ENCODE measurements at regions of chr10 and their contacts with region 1.

Region 1: DNA sequence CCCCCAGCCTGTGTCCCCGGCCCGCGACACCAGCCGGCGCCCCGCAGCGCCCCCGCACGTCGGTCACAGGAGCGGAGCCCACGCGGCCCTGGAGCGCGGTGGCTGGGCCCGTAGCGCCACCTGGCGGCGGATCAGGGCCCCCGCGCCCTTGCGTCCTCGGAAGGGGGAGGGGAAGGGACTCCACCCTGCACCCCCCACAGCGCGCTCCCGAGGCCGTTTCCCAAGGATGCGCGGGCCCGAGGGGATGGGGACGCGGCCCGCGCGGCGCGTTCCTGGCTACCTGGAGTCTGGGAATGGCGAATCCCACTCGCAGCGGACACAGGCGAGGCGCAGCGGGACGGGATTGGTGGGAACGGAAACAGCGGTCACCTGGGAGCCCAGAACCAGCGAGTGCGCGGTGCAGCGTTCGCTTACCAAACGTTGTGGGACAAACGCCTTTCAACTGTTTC is 23.8 kb upstream of the MKI67 start:
- DNase-seq: peak; percentile 65
- H3K4me3 ChIP-seq: peak overlapping the region; percentile 48 to 85 (median 74)
- H3K27ac ChIP-seq: no peak overlapping the region
- H3K4me1 ChIP-seq: peaks cover 12% of the 10 kb centered on the region
- H3K27me3 ChIP-seq: no peaks in the 10 kb centered on the region
- CTCF ChIP-seq: peak; percentile 66 to 88

Region 2: DNA sequence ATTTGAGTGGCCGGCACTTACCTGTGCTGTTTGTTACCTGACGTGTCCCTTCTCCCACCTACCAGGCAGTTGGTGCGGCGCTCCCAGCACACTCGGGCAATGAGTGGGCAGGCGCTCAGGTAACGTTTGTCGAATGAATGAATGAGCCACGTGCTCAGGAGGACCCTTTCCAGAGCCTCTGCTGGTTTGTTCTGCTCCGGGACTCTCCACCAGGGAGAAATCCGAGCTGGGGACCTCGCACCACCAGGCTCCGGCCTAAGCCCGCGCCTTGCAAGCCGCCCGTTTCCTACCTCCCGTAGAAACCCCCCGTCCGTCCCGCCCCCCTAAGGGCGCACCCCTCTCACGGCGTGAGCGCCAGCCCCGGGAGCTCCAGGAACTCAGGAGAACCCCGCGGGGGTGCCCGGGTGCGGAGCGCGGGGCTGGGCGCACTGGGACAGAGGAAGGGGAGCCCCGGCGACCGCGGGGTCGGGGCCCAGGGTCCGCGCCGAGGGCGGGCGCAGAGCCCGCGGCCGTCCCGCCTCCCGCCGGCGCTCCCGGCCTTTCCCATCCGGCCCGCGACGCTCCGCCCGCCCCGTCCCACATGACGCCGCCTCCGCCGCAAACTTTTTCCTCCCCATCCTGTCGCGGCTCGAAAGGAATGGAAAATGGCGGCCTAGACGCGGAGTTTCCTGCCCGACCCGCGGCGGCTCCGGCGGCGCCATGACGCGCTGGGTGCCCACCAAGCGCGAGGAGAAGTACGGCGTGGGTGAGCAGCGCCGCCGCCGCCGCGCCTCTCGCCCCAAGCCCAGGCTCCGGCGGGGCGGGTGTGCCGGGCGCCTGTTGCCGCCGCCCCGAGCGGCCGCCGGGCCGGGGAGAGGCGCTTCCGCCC is 1245.0 kb before region 1 on chr10 and contains the start of gene DOCK1:
- CTCF ChIA-PET with region 1: no interaction called
- dilution Hi-C with region 1: no loop called
- in situ Hi-C with region 1: no loop called
- intact Hi-C with region 1: no loop called
- DNase-seq: peak; percentile 70
- H3K4me3 ChIP-seq: peak within 1 kb of the TSS; percentile 65 to 76 (median 75)
- H3K27ac ChIP-seq: peak within 1 kb of the TSS; percentile 56
- H3K4me1 ChIP-seq: peaks cover 41% of the 10 kb centered on the region
- H3K27me3 ChIP-seq: no peaks in the 10 kb centered on the region
- CTCF ChIP-seq: no peak
- total RNA-seq, gene DOCK1: 58.1 to 115 TPM

Region 3: DNA sequence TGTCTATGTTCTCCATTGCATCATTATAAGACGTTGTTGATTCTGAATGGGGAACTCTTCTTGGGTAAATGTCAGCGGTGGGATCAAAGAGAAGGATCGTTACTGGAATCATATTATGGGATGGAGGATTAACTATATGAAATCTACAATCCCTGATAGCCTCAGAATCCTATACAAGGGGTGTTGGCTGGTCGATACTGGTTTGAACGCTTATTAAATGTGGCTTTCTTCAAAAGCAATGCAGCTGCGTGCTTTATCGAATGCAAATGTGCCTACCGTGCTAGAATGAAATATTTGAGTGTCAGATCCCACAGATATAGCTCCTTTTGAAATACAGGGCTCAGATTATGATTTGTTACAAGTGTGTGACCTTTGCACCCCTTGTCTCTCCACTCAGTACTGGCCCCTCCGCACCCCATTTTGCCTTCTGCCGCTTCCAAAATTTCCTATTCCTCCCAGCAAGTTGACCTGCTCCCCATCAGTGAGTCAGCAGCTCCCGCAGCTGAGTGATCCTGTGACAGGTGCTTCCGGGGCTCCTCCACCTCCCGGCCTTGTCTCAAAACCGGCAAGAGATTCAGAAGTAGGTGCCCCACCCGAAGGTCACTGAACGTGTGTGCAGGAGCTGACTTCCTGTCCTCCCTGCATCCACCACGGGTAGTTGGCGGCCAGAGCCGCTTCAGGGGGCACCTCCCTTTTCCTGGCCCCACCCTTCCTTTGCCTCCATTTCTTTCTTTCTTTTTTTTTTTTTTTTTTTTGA is 166.5 kb before region 1 on chr10:
- CTCF ChIA-PET with region 1: no interaction called
- dilution Hi-C with region 1: no loop called
- in situ Hi-C with region 1: no loop called
- intact Hi-C with region 1: no loop called
- DNase-seq: no peak
- H3K4me3 ChIP-seq: no peak overlapping the region
- H3K27ac ChIP-seq: no peak overlapping the region
- H3K4me1 ChIP-seq: no peaks in the 10 kb centered on the region
- H3K27me3 ChIP-seq: no peaks in the 10 kb centered on the region
- CTCF ChIP-seq: no peak

Region 4: DNA sequence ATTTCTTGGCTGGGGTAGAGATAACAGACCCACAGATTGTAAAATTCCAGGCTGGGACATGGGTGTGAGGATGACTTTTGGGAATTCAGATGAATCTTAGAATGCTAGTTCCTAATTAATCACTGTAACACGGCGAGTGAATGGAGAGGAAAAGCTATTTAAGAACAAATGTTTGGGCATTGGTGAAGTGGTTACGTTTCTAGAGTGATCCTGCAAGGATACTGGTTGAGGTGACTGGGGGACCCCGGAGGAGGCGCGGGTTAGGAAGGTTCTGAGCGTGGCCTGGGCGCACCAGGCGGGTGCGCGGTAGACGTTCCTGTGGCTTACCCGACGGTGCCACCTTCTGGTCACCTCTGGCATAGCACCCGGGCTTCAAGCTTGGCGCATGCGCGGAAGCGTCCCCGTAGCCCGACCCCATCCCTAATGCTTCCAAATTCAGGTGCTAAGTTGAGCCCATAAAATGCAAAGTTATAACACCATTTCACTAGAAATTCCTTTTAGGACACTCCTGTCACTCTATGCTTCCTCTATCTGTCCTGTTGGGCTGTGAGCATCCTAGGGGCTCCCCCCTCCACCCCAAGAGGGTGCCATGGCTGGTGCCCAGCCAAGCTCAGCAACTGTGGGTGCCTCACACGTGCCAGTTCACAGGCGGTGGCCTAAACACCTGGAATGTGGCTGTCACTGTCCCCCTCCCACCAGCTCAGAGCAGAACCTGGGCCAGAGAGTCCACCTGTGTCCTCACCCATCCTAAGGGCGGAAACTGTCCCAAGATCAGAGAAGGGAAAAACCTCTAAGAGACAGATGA is 138.7 kb before region 1 on chr10:
- CTCF ChIA-PET with region 1: no interaction called
- dilution Hi-C with region 1: no loop called
- in situ Hi-C with region 1: no loop called
- intact Hi-C with region 1: loop called (anchors 1 kb)
- DNase-seq: peak; percentile 40
- H3K4me3 ChIP-seq: no peak overlapping the region
- H3K27ac ChIP-seq: no peak overlapping the region
- H3K4me1 ChIP-seq: no peaks in the 10 kb centered on the region
- H3K27me3 ChIP-seq: no peaks in the 10 kb centered on the region
- CTCF ChIP-seq: peak; percentile 95 to 100

Region 5: DNA sequence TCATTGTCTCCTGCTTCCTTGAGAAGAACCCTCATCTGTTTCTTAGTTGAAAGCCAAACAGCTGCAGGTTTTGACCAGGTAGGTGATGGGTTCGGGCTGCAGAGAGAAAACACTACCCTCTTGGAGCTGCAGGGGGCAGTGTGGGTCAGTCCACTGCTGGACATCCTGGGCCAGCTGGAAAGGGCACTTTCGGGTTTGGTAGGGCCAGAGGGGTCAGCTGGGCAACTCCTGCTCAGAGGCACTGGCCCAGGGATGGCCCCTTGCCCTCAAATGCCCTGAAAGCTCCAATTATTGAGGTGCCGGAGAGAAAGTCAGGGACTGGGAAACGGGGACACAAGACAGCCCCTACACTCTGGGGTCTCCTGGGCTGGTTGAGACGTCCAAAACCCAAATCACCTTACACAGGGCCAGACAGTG is 114.5 kb before region 1 on chr10:
- CTCF ChIA-PET with region 1: no interaction called
- dilution Hi-C with region 1: no loop called
- in situ Hi-C with region 1: no loop called
- intact Hi-C with region 1: loop called (anchors 1 kb)
- DNase-seq: peak; percentile 32
- H3K4me3 ChIP-seq: no peak overlapping the region
- H3K27ac ChIP-seq: no peak overlapping the region
- H3K4me1 ChIP-seq: peaks cover 8% of the 10 kb centered on the region
- H3K27me3 ChIP-seq: no peaks in the 10 kb centered on the region
- CTCF ChIP-seq: peak; percentile 84 to 97

Region 6: DNA sequence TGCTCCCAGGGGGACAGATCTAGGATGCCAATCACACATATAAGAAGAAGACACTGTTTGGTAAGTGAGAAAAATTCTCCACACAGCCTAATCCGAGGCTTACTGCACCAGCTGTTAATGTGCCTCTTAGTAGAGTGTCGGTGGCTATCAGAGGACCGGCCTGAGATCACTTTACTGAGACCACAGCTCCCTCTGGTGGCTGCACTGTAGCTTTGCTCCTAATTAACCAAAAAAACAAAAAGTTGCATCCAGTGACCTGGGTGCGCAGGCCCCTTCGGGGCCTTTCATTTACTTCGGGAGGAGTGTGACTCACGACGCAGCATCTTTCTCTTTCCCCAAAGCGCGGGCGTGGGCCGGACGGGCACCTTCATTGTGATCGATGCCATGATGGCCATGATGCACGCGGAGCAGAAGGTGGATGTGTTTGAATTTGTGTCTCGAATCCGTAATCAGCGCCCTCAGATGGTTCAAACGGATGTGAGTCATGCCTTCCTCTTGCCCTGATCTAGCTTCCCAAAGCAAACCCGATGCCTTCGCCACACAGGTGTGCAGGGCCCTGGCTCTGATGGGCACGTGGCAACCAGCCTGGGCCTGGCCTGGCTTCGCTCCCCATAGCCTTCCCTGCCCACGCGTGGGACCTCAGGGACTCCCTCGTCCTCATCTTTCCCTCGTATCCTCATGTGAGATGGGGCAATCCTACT is 80.6 kb before region 1 on chr10:
- CTCF ChIA-PET with region 1: no interaction called
- dilution Hi-C with region 1: no loop called
- in situ Hi-C with region 1: no loop called
- intact Hi-C with region 1: loop called (anchors 2 kb)
- DNase-seq: peak; percentile 85
- H3K4me3 ChIP-seq: no peak overlapping the region
- H3K27ac ChIP-seq: no peak overlapping the region
- H3K4me1 ChIP-seq: peaks cover 33% of the 10 kb centered on the region
- H3K27me3 ChIP-seq: no peaks in the 10 kb centered on the region
- CTCF ChIP-seq: peak; percentile 74 to 84

Region 7: DNA sequence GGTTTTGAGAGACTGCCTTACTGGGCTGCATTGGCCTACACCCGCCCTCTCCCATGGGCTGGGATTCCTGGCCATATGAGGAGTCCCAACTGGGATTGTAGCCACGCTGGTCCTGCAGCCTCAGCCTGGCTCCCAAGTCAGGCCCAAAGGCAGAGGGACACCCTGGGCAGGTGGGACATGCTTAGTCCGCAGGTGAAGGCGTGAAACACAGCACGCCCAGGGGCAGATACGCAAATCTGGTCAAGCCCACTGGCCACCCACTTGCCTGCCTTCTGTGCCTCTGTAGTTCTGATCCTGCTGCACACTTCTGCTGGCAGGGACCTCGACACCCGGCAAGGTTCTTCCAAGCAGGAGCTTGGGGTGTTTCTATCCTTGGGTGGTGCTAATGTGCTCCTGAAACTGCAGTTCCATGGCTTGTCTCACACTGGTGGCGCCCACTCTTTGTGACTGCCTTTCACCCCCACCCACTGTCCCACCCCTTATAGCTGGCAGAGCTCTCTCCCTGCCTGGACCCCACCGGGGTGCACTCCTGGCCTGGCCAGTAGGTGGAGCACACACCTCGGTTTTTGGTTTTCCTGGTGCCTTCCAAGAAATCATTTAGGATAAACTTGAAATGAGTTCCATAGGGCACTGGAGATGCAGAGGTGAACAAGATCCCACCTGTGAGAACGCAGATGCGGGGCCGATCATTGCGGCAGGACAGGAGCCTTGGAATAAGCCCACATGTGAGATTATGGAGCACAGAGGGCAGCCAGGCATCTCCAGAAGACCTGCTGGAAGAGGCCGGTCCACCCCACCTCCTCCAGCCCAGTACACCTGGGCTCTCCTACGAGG is 71.7 kb before region 1 on chr10:
- CTCF ChIA-PET with region 1: no interaction called
- dilution Hi-C with region 1: no loop called
- in situ Hi-C with region 1: loop called in 1 of 2 experiments (anchors 10 kb)
- intact Hi-C with region 1: loop called (anchors 1 kb)
- DNase-seq: no peak
- H3K4me3 ChIP-seq: no peak overlapping the region
- H3K27ac ChIP-seq: no peak overlapping the region
- H3K4me1 ChIP-seq: no peaks in the 10 kb centered on the region
- H3K27me3 ChIP-seq: no peaks in the 10 kb centered on the region
- CTCF ChIP-seq: peak; percentile 58 to 79

Region 8: GRCh38 chr10:128087884-128088709 is 62.0 kb before region 1 on chr10:
- CTCF ChIA-PET with region 1: no interaction called
- dilution Hi-C with region 1: no loop called
- in situ Hi-C with region 1: loop called in 1 of 2 experiments (anchors 10 kb)
- intact Hi-C with region 1: no loop called
- DNase-seq: peak; percentile 25
- H3K4me3 ChIP-seq: no peak overlapping the region
- H3K27ac ChIP-seq: no peak overlapping the region
- H3K4me1 ChIP-seq: peaks cover 13% of the 10 kb centered on the region
- H3K27me3 ChIP-seq: no peaks in the 10 kb centered on the region
- CTCF ChIP-seq: peak in 1 of 2 donors; percentile 44

Region 9: GRCh38 chr10:128125944-128126764 is 23.9 kb before region 1 on chr10 and contains the start of gene MKI67:
- CTCF ChIA-PET with region 1: no interaction called
- dilution Hi-C with region 1: no loop called
- in situ Hi-C with region 1: no loop called
- intact Hi-C with region 1: loop called (anchors 1 kb)
- DNase-seq: peak; percentile 93
- H3K4me3 ChIP-seq: peak within 1 kb of the TSS; percentile 83 to 88 (median 87)
- H3K27ac ChIP-seq: peak within 1 kb of the TSS; percentile 68
- H3K4me1 ChIP-seq: peaks cover 26% of the 10 kb centered on the region
- H3K27me3 ChIP-seq: no peaks in the 10 kb centered on the region
- CTCF ChIP-seq: no peak
- total RNA-seq, gene MKI67: 1.3 to 88.5 TPM

Region 10: DNA sequence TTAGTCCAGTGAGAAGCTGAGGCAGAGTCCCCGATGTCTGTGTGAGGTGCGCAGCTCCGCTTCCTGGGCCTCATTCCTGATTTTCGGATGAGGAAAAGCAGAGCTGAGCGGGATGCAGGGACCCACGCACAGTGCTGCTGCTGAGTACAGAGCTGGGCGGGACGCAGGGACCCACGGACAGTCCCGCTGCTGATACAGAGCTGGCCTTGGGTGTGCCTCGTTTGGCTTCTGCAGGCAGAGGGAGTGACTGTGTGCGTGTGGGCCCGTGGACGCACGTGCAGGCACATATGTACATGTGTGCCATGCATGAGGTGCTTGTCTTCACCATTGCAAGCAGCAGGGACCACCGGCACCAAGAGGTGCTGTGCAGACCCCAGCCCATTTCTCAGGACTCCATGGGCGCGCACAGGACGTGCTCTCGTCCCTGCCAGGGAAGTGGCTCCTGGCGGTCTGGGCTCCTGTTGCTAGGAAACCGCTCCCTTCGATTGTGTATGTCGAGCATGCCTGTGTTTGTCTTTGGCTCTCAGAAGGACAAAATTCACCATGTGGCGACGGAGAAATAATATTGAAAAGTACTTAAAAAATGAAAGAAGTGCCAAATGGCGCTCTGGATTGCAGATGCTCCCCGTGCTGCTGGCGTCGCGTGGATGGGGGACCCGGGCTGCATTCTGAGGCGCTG is 279.9 kb after region 1 on chr10:
- CTCF ChIA-PET with region 1: no interaction called
- dilution Hi-C with region 1: no loop called
- in situ Hi-C with region 1: no loop called
- intact Hi-C with region 1: no loop called
- DNase-seq: no peak
- H3K4me3 ChIP-seq: no peak overlapping the region
- H3K27ac ChIP-seq: no peak overlapping the region
- H3K4me1 ChIP-seq: no peaks in the 10 kb centered on the region
- H3K27me3 ChIP-seq: no peaks in the 10 kb centered on the region
- CTCF ChIP-seq: no peak

Region 11: GRCh38 chr10:128727114-128727513 is 577.0 kb after region 1 on chr10:
- CTCF ChIA-PET with region 1: no interaction called
- dilution Hi-C with region 1: no loop called
- in situ Hi-C with region 1: no loop called
- intact Hi-C with region 1: no loop called
- DNase-seq: no peak
- H3K4me3 ChIP-seq: no peak overlapping the region
- H3K27ac ChIP-seq: no peak overlapping the region
- H3K4me1 ChIP-seq: no peaks in the 10 kb centered on the region
- H3K27me3 ChIP-seq: no peaks in the 10 kb centered on the region
- CTCF ChIP-seq: no peak